Caco-2 (cell line): ENCODE measurements at regions of chr4 and their contacts with region 1.

Region 1: DNA sequence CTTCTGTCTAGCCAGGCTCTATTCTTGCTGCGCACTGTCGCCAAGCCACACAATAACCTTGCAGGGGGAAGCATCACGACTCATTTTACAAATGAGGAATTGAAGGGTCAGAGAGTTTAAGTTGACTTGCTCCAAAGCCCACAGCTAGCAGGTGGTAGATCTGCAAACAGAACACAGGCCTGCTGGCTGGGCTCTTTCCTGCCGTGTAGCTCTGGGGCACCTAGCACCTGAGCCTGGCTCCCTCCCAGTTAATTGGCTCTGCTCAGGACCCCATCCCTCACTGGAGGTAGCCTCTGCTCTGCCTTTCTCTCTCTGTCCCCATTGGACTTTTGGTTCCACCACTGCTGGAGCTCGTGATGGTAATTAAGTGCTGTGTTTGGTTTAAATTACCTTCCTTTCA is 98.5 kb downstream of the NSUN7 start:
- DNase-seq: no peak
- H3K4me3 ChIP-seq: no peak overlapping the region
- H3K4me3 Mint-ChIP-seq: no peak overlapping the region
- H3K27ac Mint-ChIP-seq: no peak overlapping the region
- H3K4me1 ChIP-seq: no peaks in the 10 kb centered on the region
- H3K4me1 Mint-ChIP-seq: no peaks in the 10 kb centered on the region
- H3K27me3 ChIP-seq: no peaks in the 10 kb centered on the region
- H3K27me3 Mint-ChIP-seq: no peaks in the 10 kb centered on the region
- CTCF ChIP-seq: no peak

Region 2: DNA sequence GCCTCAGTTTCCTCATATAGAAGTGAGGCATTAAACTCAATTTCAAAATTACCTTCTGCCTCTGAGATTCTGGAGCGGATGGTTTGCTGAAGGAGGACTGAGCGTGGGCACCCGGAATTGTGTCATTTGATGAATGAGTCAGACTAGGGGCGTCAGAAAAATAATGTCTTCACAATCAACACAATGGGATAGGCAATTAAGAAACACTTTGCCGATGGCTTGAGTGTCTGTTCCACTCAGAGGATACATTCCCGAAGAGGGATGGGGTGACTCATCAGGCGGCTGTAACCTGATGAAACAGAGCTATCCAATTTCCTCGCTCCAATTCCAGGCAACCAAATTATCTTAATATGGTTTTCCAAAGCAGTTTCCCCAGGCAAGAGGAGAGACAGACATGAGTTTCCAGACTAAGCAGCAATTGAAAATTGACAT is 514.3 kb before region 1 on chr4:
- CTCF ChIA-PET with region 1: no interaction called
- POLR2A ChIA-PET with region 1: no interaction called
- intact Hi-C with region 1: no loop called
- DNase-seq: no peak
- H3K4me3 ChIP-seq: no peak overlapping the region
- H3K4me3 Mint-ChIP-seq: no peak overlapping the region
- H3K27ac Mint-ChIP-seq: no peak overlapping the region
- H3K4me1 ChIP-seq: no peaks in the 10 kb centered on the region
- H3K4me1 Mint-ChIP-seq: peaks cover 4% of the 10 kb centered on the region
- H3K27me3 ChIP-seq: no peaks in the 10 kb centered on the region
- H3K27me3 Mint-ChIP-seq: no peaks in the 10 kb centered on the region
- CTCF ChIP-seq: no peak

Region 3: GRCh38 chr4:40963897-40964478 is 115.7 kb after region 1 on chr4:
- CTCF ChIA-PET with region 1: no interaction called
- POLR2A ChIA-PET with region 1: no interaction called
- intact Hi-C with region 1: no loop called
- DNase-seq: no peak
- H3K4me3 ChIP-seq: no peak overlapping the region
- H3K4me3 Mint-ChIP-seq: no peak overlapping the region
- H3K27ac Mint-ChIP-seq: no peak overlapping the region
- H3K4me1 ChIP-seq: no peaks in the 10 kb centered on the region
- H3K4me1 Mint-ChIP-seq: no peaks in the 10 kb centered on the region
- H3K27me3 ChIP-seq: no peaks in the 10 kb centered on the region
- H3K27me3 Mint-ChIP-seq: no peaks in the 10 kb centered on the region
- CTCF ChIP-seq: no peak

Region 4: GRCh38 chr4:41145571-41146078 is 297.4 kb after region 1 on chr4:
- CTCF ChIA-PET with region 1: interaction called, 10 read pairs
- POLR2A ChIA-PET with region 1: no interaction called
- intact Hi-C with region 1: no loop called
- DNase-seq: peak in 1 of 2 experiments; percentile 53
- H3K4me3 ChIP-seq: no peak overlapping the region
- H3K4me3 Mint-ChIP-seq: no peak overlapping the region
- H3K27ac Mint-ChIP-seq: peak overlapping the region; percentile 58
- H3K4me1 ChIP-seq: peaks cover 39% of the 10 kb centered on the region
- H3K4me1 Mint-ChIP-seq: peaks cover 36% of the 10 kb centered on the region
- H3K27me3 ChIP-seq: no peaks in the 10 kb centered on the region
- H3K27me3 Mint-ChIP-seq: no peaks in the 10 kb centered on the region
- CTCF ChIP-seq: no peak